ENCODE measurements at regions of chr5 and their contacts with region 1.

Region 1: DNA sequence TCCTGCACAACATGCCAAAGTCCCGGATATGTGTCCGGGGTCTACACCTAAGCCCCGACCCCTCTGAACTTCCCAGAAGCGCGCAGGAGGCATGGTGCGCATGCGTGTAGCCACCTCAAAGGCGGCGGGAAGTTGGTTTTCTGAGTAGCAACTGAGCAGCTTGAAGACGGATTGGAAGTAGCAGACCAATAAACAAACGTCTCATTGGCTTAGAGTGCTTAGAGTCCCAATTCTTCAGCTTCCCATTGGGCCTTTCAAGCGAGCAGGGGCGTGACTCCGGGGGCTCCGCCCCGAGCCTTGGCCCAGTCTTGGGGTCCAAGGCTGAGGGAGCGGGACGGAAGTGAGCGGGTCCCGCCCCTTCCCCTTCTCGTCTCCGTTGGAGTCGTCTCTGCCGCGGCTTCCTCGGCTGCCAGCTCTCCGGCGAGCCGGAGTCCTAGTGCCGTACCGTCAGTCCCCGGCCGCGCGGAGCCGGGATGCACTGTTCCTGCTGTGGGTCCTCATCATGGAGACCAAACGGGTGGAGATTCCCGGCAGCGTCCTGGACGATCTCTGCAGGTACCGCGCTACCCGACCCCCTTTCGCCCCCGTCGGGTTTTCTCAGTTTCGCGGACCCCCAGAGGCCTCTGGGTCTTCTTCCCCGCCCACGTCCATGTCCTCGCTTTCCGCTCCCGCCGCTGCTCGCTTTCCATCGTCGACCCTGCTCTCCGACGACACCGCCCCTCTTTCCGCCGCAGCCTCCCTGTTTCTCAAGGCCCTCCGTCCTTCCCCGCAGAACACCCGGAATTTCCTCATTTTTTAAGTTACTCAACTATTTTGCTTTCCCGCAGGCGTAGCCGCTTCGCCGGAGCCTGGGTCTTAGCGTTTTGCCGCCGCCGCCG is at the start of gene DCP2:
- DNase-seq: peak; percentile 92

Region 2: GRCh38 chr5:112921833-112922817 is 54.5 kb before region 1 on chr5 and contains the start of gene REEP5:
- CTCF ChIA-PET with region 1: no interaction called
- POLR2A ChIA-PET with region 1: interaction called, 33 read pairs
- DNase-seq: peak; percentile 92

Region 3: GRCh38 chr5:112960315-112960714 is 16.4 kb before region 1 on chr5:
- CTCF ChIA-PET with region 1: interaction called, 5 read pairs
- POLR2A ChIA-PET with region 1: interaction called, 30 read pairs
- DNase-seq: no peak

Region 4: DNA sequence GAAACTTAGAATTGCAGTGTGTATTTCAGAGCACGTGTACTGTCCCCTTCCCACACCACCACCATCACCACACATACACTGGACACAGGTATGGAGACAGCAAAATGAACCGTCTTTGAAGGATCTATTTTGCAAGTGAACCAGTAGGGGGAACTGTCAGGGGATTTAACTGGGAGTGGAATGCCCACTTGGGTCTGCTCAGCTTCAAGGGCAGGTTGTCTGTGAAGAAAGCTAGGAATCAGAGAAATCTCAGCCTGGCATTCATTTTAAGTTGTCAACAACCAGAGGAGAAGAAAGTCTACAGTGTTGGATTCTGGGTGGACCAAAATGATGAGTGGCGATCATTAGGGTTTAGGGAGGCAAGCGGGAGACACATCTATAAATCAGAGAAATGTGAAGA is 146.9 kb after region 1 on chr5:
- CTCF ChIA-PET with region 1: no interaction called
- POLR2A ChIA-PET with region 1: no interaction called
- DNase-seq: peak; percentile 58

Measured in HEK293T (cell line).